HEK293 (cell line): ENCODE measurements at regions of chr11 and their contacts with region 1.

Region 1: DNA sequence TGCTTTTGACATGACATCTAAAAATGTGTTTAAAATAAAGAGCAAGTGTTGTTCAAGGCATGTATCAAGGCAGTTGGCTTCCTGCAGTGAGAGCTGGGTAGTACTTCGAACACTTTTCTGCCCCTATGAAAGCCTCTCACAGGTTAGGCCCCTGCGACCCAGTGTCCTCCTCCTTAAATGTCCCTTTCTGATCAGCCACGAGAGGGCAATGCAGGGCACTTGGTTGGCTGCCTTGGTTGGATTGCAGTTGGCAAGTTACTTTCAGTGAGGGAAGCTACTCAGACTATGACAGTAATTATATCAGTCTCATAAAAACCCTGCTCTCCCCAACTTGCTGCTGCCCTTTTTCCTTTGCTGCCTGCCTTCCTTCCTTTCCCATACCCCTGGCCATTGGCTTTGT is 743.8 kb downstream of the NTM start:
- H3K4me3 ChIP-seq: no peak overlapping the region
- H3K27ac ChIP-seq: no peak overlapping the region
- H3K4me1 ChIP-seq: no peaks in the 10 kb centered on the region
- CTCF ChIP-seq: no peak

Region 2: DNA sequence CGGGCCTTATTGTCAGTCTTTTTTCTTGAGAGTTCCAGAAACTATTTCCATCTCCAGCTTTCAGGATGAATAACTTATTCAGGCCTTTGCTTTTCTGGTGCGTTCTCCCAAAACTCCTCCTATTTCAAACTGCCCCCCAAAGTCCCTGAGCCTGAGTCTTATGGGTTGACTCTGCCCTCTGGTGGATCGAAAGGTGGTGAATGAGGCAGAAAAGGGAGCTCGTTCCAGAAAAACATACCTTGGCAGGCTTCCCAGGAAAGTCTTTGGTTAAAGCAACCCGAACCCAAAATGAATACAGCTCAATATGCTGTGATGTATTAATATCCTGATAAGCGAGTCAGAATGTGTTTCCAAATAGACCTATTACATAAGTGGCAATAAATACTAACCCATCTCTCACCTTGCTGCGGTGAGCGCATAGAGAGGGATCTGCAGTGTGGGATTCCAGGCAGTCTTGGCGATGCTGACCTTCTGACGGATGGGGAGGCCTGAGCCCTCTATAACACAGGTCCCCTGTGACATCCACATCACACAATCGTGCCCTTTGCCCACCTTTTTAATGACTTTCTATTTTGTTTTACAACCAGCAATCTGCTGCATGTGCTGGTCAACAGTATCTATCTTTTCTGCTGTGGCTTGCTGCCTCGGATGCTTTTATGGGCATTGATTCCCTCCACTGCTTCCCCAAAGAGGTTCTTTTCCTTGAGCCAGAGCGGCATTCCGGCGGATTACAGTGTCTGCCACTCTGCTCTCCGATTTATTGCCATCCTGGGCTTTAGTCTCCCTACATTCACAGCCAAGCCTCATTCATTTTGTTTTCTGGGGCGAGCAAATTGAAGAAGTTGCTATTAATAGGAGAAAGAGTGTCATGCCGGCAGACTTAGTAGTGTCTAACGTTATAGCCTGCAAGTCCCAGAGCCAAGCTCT is 13.1 kb after region 1 on chr11:
- CTCF ChIA-PET with region 1: interaction called, 12 read pairs
- POLR2A ChIA-PET with region 1: no interaction called
- H3K4me3 ChIP-seq: no peak overlapping the region
- H3K27ac ChIP-seq: no peak overlapping the region
- H3K4me1 ChIP-seq: 0 out of 2 replicates have a peak, but pooled peaks cover 3% of the 10 kb centered on the region
- CTCF ChIP-seq: no peak

Region 3: DNA sequence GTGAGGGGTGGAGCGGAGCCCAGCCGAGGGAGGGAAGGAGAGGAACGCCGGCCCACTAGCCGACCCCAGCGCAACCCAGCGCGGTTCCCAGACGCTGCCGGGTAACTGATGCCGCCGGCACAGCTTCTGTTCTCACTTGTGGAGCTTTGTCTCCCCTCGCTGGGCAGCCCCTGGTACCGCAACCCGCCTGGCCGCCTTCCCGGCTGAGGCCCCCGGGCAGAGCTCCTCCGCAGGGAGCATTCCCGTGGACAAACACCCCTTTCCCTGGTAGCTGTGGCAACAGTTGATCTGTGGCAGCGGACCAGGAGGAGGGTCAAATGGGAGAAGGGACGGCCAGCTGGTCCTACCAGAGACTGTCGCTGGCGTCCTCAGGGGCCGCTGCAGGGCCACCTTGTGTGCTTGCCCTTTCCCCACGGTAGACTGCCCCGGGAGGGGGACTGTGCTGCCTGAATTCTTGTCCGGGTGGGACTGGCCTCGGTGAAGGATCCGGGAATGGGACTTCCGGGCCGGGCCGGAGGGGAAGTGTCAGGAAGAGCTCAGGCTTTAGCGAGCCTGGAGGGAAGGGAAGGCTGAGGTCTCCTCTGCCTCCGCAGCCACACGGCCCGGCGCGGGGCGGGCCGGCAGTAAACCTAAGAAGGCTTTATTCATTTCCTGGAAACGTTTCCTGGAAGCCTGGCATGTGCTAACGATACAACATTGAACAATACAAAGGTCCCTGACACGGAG is 950.1 kb after region 1 on chr11:
- CTCF ChIA-PET with region 1: interaction called, 10 read pairs
- POLR2A ChIA-PET with region 1: no interaction called
- H3K4me3 ChIP-seq: peak overlapping the region; percentile 26
- H3K27ac ChIP-seq: no peak overlapping the region
- H3K4me1 ChIP-seq: no peaks in the 10 kb centered on the region
- CTCF ChIP-seq: no peak